ENCODE measurements at regions of chr20 and their contacts with region 1.

Region 1: DNA sequence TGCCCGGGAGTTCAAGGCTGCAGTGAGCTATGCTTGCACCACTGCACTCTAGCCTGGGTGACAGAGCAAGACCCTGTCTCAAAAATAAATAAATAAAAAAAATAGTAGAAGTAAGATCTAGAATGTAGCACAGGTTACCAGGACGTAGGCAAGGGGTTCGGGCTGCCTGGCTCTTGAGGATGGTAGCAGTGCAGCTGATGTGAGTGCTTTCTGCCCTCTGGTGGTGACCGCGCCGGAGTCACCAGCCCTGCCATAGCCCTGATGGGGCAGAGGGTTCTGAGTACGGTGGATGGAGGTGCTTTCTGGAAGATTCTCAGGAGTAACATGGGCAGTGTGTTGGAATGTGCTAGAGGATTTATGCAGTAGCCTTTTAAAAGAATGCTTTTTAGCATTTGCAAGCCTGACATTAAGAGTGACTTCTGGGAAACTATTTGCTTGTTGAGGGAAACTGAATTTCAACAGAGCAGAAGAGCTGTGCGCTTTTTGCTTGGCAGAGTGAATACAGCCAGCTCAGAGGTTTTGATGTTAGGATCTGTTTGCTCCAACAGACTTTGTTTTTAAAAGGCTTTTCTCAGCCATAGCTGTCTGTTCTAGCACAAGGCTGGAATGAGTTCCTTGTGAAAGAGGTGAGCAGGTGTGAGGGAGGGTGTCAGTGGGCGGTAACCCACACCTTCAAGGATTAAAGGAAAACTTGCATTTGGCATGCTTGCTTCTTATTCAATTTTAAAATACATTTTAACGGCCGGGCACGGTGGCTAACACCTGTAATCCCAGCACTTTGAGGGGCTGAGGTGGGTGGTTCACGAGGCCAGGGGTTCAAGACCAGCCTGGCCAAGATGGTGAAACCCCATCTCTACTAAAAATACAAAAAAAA is 65.9 kb downstream of the PTPN1 start:
- DNase-seq: peak; percentile 80
- ATAC-seq: peak; percentile 86
- H3K4me3 Mint-ChIP-seq: no peak overlapping the region
- H3K27ac Mint-ChIP-seq: peak overlapping the region; percentile 68
- H3K4me1 Mint-ChIP-seq: peaks cover 20% of the 10 kb centered on the region
- H3K27me3 Mint-ChIP-seq: no peaks in the 10 kb centered on the region
- CTCF ChIP-seq: peak; percentile 75

Region 2: DNA sequence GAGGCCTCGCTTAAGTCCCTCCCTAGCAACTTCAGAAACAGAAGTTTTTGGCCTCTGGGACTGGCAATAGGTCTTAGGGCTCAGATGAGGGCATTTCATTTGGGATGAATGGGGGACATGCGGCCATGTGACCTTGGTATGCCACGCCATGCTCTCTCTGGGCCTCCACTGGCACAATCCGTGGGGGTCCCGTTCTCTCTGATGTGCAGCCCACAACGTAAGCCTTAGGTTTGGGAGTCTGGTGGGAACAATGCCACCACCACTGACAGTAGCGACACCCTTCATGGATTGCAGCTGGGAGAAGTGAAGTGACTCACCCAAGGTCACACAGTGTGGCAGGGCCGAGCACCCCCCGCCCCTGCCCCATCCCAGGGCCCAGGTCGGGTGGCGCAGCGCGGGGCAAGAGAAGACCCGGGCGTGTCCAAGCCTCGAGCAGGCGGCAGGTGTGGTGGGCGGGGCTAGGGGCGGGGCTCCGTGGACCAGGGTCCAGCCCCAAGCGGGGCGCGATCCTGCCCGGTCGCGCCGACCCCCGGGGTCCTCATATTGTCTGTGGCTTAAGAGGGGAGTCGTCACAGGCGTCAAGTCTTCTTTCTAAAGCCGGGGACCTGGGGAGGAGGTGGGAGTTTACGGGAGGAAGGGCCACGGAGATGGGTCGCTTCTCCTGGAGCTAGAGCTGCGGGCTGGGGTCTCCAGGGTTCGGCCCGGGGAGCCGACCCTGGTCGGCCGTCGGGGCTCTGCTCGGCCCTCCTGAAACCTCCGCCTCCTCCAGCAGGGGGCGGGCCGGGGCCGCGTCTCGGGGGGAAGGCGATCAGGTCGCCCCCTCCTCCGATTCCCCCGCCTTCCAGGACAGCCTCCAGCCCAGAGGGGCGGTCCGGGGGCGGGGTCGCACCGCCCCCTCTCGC is 386.2 kb before region 1 on chr20:
- CTCF ChIA-PET with region 1: interaction called, 8 read pairs
- POLR2A ChIA-PET with region 1: no interaction called
- intact Hi-C with region 1: loop called (anchors 10 kb)
- DNase-seq: peak; percentile 87
- ATAC-seq: peak; percentile 64
- H3K4me3 Mint-ChIP-seq: peak overlapping the region; percentile 35
- H3K27ac Mint-ChIP-seq: no peak overlapping the region
- H3K4me1 Mint-ChIP-seq: peaks cover 17% of the 10 kb centered on the region
- H3K27me3 Mint-ChIP-seq: peaks cover 9% of the 10 kb centered on the region
- CTCF ChIP-seq: peak; percentile 68

Region 3: DNA sequence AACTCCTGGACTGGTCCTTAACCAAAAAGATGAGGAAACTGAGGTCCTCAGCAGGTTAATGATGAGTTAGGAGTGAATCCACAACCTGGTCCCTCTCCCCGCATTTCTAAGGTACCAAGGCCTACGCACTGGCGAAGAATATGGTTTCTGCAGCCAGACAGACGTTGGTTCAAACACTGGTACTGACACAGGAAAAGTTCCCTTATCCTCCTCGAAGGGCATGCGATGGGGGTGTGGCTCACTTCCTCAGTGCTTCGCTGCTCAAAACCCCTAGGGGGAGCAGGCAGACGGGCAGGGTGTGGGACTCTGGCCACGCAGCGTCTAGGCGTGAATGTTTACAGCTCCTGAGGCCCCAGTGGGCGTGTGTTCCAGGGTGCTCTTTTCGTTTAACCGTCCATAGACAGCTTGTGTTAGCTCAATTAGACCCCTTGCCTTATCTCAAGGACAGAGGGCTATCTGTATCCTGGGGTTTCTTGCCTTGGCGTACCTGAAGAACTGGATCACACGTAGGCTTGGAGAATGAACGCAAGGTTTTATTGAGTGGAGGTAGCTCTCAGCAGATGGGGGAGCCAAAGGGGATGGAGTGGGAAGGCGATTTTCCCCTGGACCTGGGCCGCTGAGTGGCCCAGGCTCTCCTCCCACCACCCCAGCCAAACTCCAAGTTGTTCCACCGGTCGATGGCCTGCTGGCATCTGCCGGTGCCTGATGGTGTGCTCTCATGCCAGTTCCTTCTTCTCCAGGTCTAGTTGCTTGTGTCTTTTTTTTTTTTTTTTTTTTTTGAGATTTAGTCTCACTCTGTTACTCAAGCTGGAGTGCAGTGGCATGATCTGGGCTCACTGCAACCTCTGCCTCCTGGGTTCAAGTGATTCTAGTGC is 97.7 kb before region 1 on chr20:
- CTCF ChIA-PET with region 1: interaction called, 108 read pairs
- POLR2A ChIA-PET with region 1: no interaction called
- intact Hi-C with region 1: loop called (anchors 2 kb)
- DNase-seq: peak; percentile 85
- ATAC-seq: peak; percentile 99
- H3K4me3 Mint-ChIP-seq: no peak overlapping the region
- H3K27ac Mint-ChIP-seq: no peak overlapping the region
- H3K4me1 Mint-ChIP-seq: peaks cover 15% of the 10 kb centered on the region
- H3K27me3 Mint-ChIP-seq: no peaks in the 10 kb centered on the region
- CTCF ChIP-seq: peak; percentile 81

Region 4: DNA sequence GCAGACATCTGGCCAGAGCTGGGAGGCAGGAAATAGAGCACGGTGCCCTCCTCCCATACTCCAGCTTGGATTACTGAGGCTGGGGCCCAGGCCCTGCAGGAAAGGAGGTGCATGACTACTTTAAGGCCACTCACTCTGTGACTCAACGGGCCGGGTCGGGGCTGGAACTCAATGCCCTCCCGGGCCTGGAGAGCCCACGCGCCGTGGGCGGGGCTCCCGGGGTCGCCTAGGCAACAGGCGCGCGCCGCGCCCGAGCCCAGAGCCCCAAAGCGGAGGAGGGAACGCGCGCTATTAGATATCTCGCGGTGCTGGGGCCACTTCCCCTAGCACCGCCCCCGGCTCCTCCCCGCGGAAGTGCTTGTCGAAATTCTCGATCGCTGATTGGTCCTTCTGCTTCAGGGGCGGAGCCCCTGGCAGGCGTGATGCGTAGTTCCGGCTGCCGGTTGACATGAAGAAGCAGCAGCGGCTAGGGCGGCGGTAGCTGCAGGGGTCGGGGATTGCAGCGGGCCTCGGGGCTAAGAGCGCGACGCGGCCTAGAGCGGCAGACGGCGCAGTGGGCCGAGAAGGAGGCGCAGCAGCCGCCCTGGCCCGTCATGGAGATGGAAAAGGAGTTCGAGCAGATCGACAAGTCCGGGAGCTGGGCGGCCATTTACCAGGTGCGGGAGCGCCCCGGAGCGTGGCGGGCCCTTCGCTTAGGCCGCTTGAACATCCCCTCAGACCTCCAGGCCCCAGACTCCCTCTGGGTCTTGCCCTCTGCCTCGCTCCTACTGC is 66.0 kb before region 1 on chr20 and contains the start of gene PTPN1:
- CTCF ChIA-PET with region 1: interaction called, 64 read pairs
- POLR2A ChIA-PET with region 1: interaction called, 10 read pairs
- intact Hi-C with region 1: no loop called
- DNase-seq: peak; percentile 99
- ATAC-seq: peak; percentile 93
- H3K4me3 Mint-ChIP-seq: peak within 1 kb of the TSS; percentile 98
- H3K27ac Mint-ChIP-seq: peak within 1 kb of the TSS; percentile 93
- H3K4me1 Mint-ChIP-seq: peaks cover 38% of the 10 kb centered on the region
- H3K27me3 Mint-ChIP-seq: no peaks in the 10 kb centered on the region
- CTCF ChIP-seq: no peak
- total RNA-seq, gene PTPN1: 65.1 to 66.6 TPM

Region 5: DNA sequence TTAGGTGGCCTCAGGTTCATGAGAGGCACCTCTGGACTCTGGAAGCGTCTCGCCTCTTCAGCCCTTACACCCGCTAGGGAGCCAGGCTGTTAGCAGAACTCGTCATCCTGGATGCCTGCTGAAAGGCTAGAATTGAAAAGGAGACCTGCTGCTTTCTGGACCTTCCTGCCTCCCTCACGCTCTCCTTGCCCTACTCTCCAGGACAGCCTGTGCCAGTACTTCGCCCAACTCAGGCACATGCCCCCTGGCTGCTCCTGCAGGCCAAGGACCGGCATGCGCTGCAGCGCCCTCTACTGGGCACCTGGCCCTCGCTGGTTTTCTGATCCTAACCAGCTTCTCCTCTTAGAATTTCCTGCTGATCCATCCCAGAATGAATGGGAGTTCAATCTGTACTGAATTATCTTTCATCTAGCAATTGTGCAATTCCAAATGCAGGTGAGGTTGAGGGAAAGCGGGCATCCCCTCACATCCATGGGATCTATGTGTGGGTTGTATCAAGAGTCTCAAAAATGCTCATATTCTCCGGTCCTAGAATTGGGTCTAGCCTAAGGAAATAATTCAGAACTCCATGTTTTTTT is 12.0 kb after region 1 on chr20:
- CTCF ChIA-PET with region 1: interaction called, 30 read pairs
- POLR2A ChIA-PET with region 1: no interaction called
- intact Hi-C with region 1: no loop called
- DNase-seq: peak; percentile 84
- ATAC-seq: peak; percentile 67
- H3K4me3 Mint-ChIP-seq: no peak overlapping the region
- H3K27ac Mint-ChIP-seq: no peak overlapping the region
- H3K4me1 Mint-ChIP-seq: peaks cover 2% of the 10 kb centered on the region
- H3K27me3 Mint-ChIP-seq: no peaks in the 10 kb centered on the region
- CTCF ChIP-seq: peak; percentile 98

Region 6: GRCh38 chr20:50655311-50655880 is 79.3 kb after region 1 on chr20:
- CTCF ChIA-PET with region 1: no interaction called
- POLR2A ChIA-PET with region 1: no interaction called
- intact Hi-C with region 1: no loop called
- DNase-seq: no peak
- ATAC-seq: no peak
- H3K4me3 Mint-ChIP-seq: no peak overlapping the region
- H3K27ac Mint-ChIP-seq: no peak overlapping the region
- H3K4me1 Mint-ChIP-seq: no peaks in the 10 kb centered on the region
- H3K27me3 Mint-ChIP-seq: peaks cover 5% of the 10 kb centered on the region
- CTCF ChIP-seq: no peak

Region 7: GRCh38 chr20:50690634-50691572 is 114.8 kb after region 1 on chr20 and contains the start of gene RIPOR3:
- CTCF ChIA-PET with region 1: no interaction called
- POLR2A ChIA-PET with region 1: no interaction called
- intact Hi-C with region 1: no loop called
- DNase-seq: peak; percentile 9
- ATAC-seq: no peak
- H3K4me3 Mint-ChIP-seq: no peak within 1 kb of the TSS
- H3K27ac Mint-ChIP-seq: no peak within 1 kb of the TSS
- H3K4me1 Mint-ChIP-seq: peaks cover 8% of the 10 kb centered on the region
- H3K27me3 Mint-ChIP-seq: peaks cover 36% of the 10 kb centered on the region
- CTCF ChIP-seq: no peak
- total RNA-seq, gene RIPOR3: not detected

Measured in activated CD8-positive, alpha-beta T cell treated with anti-CD3 and anti-CD28 coated beads for 36 hours (primary cell).